ENCODE measurements at regions of chr14 and their contacts with region 1.

Region 1: DNA sequence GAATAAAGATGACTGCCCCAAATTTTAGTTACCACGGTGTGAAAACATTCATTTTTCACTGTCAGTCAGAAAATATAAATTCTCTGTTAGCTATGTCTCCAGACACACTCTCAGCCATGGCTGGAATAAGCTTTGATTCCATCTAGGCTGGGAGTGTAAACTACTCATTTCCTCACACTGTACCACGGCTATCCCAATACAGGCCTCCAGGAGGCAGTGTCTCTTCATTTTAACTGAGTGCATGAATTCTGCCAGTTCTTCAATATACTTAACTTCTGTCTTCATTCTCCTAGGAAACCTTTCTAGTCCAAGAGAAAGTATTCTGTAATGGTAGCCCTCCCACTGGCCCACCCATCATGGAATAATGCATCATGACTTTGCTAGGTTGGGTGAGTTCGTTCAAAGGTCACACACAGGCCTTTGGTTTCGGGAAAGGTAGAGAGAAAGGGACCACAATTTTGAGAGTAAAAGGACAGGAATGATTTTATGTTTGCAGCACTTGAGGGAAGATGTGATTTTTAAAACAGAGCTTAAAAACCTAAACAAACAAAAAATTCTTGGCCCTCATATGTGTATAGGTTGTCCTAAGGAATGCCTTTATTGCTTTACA is 381.1 kb downstream of the SEC23A start:
- DNase-seq: no peak
- H3K4me3 ChIP-seq: no peak overlapping the region
- H3K27ac ChIP-seq: peak overlapping the region in 1 of 8 donors; percentile 39
- H3K4me1 ChIP-seq: no peaks in the 10 kb centered on the region
- H3K27me3 ChIP-seq: no peaks in the 10 kb centered on the region
- CTCF ChIP-seq: peak; percentile 42 to 89 (median 68)
- POLR2A ChIP-seq: no peak

Region 2: GRCh38 chr14:38357557-38357956 is 364.4 kb before region 1 on chr14:
- intact Hi-C with region 1: no loop called
- DNase-seq: no peak
- H3K4me3 ChIP-seq: no peak overlapping the region
- H3K27ac ChIP-seq: no peak overlapping the region
- H3K4me1 ChIP-seq: no peaks in the 10 kb centered on the region
- H3K27me3 ChIP-seq: no peaks in the 10 kb centered on the region
- CTCF ChIP-seq: no peak
- POLR2A ChIP-seq: no peak

Region 3: GRCh38 chr14:38848243-38848935 is 126.5 kb after region 1 on chr14:
- intact Hi-C with region 1: no loop called
- DNase-seq: no peak
- H3K4me3 ChIP-seq: no peak overlapping the region
- H3K27ac ChIP-seq: no peak overlapping the region
- H3K4me1 ChIP-seq: peaks cover 0 to 6% (median 0%) of the 10 kb centered on the region in 6 donors
- H3K27me3 ChIP-seq: no peaks in the 10 kb centered on the region
- CTCF ChIP-seq: no peak
- POLR2A ChIP-seq: no peak

Region 4: DNA sequence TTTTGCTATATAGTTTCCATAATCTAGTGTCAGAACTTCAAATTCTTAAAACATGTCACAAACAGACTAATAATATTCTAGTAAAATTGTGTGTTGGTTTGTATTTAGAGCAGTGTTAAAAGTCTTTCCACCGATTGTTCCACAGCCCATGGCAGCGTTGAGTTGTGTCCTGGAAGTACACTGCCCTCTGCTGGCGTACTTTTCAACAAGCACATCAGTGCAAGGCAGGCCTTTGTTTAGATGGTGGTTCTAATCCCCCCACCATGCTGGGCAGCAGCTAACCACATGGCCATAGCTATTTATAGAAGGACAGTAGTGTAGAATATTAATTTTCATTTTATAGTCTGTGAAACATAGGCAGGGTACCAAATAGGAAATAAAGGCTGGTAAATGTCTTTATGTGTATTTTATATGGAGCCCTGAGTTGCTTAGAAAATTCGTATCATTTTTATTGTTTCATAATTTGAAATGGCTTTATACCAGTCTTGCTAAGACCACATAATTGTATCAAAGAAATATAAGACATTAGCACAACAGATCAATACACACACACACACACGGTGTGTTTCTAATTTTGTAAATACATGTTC is 145.7 kb after region 1 on chr14:
- intact Hi-C with region 1: loop called (anchors 10 kb)
- DNase-seq: no peak
- H3K4me3 ChIP-seq: no peak overlapping the region
- H3K27ac ChIP-seq: peak overlapping the region in 1 of 8 donors; percentile 11
- H3K4me1 ChIP-seq: peaks cover 0 to 15% (median 0%) of the 10 kb centered on the region in 6 donors
- H3K27me3 ChIP-seq: no peaks in the 10 kb centered on the region
- CTCF ChIP-seq: peak; percentile 7 to 85 (median 70)
- POLR2A ChIP-seq: no peak

Region 5: GRCh38 chr14:39015360-39015961 is 293.5 kb after region 1 on chr14:
- intact Hi-C with region 1: loop called (anchors 5 kb)
- DNase-seq: no peak
- H3K4me3 ChIP-seq: no peak overlapping the region
- H3K27ac ChIP-seq: no peak overlapping the region
- H3K4me1 ChIP-seq: peaks cover 0 to 6% (median 0%) of the 10 kb centered on the region in 6 donors
- H3K27me3 ChIP-seq: no peaks in the 10 kb centered on the region
- CTCF ChIP-seq: peak in 10 of 11 experiments; percentile 24 to 79 (median 64)
- POLR2A ChIP-seq: no peak

Region 6: GRCh38 chr14:39203659-39204606 is 482.0 kb after region 1 on chr14:
- intact Hi-C with region 1: no loop called
- DNase-seq: no peak
- H3K4me3 ChIP-seq: no peak overlapping the region
- H3K27ac ChIP-seq: no peak overlapping the region
- H3K4me1 ChIP-seq: no peaks in the 10 kb centered on the region
- H3K27me3 ChIP-seq: no peaks in the 10 kb centered on the region
- CTCF ChIP-seq: no peak
- POLR2A ChIP-seq: no peak

Measured in spleen (tissue), 13 donors.